ENCODE measurements at regions of chr14 and their contacts with region 1.

Region 1: GRCh38 chr14:93115069-93115820 is 480 bp downstream of the ITPK1 start:
- DNase-seq: peak; percentile 71 to 78
- ATAC-seq: peak; percentile 77 to 80
- H3K4me3 ChIP-seq: peak overlapping the region; percentile 83 to 94 (median 92)
- H3K27ac ChIP-seq: peak overlapping the region; percentile 95 to 96 (median 96)
- H3K4me1 ChIP-seq: peaks cover 24 to 29% of the 10 kb centered on the region in 2 donors
- H3K27me3 ChIP-seq: no peaks in the 10 kb centered on the region
- CTCF ChIP-seq: peak in 2 of 5 experiments; percentile 3 to 7
- POLR2A ChIP-seq: peak; percentile 58 to 69

Region 2: DNA sequence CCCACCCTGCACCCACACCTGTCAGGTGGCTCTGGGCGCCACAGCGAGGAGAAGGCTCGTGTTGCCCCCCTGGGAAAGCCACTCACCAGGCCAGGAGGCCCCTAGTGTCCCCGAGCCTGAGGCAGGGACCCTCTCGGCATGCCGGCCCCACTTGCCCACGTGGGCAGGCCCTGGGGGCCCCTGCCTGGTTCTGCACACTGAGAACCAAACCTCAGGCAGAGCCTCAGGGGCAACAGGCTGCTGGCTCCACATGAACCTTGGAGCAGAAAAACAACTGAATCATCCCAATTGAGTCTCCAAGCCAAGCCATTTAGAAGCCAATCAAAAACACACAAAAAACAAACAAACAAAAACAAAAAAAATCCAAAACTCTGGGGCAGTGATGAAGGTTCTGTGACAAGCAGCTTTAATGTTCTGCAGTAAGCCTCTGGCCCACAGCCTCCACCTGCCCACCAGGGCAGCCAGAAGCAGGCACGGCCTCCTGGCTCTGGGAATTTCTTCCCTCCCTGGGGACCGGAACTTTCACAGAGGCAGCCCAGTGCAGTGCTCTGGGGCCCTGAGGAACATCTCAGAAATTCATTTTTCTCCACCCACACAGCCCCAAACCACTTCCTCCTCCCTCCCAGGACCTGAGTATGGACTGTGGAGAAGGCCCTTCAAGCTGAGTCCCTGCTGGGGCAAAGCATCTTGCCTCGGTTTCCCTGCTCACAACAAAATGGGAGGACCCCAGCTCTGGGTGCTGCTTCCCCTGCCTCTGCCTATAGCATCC is 102.1 kb before region 1 on chr14:
- in situ Hi-C with region 1: no loop called
- intact Hi-C with region 1: loop called (anchors 2 kb)
- DNase-seq: no peak
- ATAC-seq: no peak
- H3K4me3 ChIP-seq: no peak overlapping the region
- H3K27ac ChIP-seq: peak overlapping the region in 2 of 4 donors; percentile 4
- H3K4me1 ChIP-seq: peaks cover 79 to 80% of the 10 kb centered on the region in 2 donors
- H3K27me3 ChIP-seq: no peaks in the 10 kb centered on the region
- CTCF ChIP-seq: no peak
- POLR2A ChIP-seq: no peak

Region 3: DNA sequence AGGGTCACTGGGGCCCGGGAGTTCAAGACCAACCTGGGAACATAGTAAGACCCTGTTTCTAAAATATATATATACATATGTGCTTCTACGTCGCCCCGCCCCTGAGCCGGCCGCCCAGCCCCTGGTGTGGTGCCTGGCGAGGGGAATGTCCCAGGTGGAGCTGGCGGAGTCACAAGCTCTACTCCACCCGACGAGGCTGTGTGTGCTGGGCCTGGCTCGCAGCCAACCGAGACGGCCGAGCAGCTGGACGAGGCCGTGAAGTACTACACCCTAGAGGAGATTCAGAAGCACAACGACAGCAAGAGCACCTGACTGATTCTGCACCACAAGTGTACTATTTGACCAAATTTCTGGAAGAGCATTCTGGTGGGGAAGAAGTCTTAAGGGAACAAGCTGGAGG is 22.6 kb after region 1 on chr14:
- in situ Hi-C with region 1: no loop called
- intact Hi-C with region 1: loop called (anchors 1 kb)
- DNase-seq: no peak
- ATAC-seq: no peak
- H3K4me3 ChIP-seq: no peak overlapping the region
- H3K27ac ChIP-seq: no peak overlapping the region
- H3K4me1 ChIP-seq: no peaks in the 10 kb centered on the region
- H3K27me3 ChIP-seq: no peaks in the 10 kb centered on the region
- CTCF ChIP-seq: no peak
- POLR2A ChIP-seq: no peak